Natural killer cell (primary cell): ENCODE measurements at regions of chr17 and their contacts with region 1.

Region 1: DNA sequence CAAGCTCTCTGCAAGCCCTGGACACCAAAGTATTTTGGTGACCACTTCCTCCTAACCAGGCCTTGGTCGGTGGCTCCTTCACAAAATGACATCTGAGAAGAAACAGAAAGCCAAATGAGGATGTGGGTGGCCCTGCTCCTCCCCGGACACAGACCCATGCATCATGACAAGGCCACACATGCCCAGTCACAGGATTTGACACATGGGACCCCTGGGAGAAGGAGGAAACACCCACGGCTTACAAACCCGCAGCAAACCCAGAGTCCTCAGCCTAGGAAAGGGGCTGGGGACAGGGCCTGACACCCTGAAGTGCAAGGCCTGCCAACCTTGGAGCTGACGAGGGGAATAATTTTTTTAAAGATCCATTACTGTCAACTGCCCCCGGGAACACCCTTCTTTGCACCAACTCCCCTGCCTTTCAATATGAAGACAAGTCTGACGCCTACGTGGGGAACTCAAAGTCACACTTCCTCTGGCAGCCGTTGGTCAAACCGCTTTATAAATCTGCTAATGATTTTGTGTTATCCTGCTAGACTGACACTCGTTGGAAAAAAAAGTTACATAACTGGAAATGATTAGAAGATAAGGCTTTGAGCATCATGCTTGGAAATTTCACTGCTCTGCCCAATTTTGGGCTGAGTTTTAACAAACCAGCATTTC is 41.3 kb downstream of the GAS7 start:
- DNase-seq: peak; percentile 59 to 65
- ATAC-seq: peak; percentile 71 to 82 (median 81)
- H3K4me3 ChIP-seq: no peak overlapping the region
- H3K4me3 Mint-ChIP-seq: peak overlapping the region; percentile 71
- H3K27ac ChIP-seq: peak overlapping the region; percentile 82
- H3K27ac Mint-ChIP-seq: peak overlapping the region; percentile 92 to 94
- H3K4me1 ChIP-seq: peaks cover 57% of the 10 kb centered on the region
- H3K4me1 Mint-ChIP-seq: peaks cover 32 to 46% of the 10 kb centered on the region in 2 donors
- H3K27me3 ChIP-seq: no peaks in the 10 kb centered on the region
- H3K27me3 Mint-ChIP-seq: no peaks in the 10 kb centered on the region
- CTCF ChIP-seq: no peak

Region 2: DNA sequence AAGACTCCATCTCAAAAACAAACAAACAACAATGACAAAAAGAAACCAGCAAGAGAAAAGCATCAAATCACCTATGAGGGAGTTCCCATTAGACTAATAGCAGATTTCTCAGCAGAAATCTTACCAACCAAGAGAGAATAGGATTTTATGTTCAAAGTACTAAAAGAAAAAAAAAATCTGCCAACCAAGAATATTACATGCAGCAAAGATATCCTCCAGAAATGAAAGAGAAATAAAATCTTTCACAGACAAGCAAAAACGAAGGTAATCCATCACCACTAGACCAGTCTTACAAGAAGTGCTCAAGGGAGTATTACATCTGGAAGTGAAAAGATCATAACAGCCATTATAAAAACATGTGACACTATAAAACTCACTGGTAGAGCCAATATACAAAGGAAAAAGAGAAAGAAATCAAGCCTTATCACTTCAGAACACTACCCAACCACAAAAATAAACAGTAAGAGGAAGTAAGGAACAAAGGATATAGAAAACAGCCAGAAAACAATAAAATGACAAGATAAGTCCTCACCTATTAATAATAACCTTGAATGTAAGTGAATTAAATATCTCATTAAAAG is 647.8 kb before region 1 on chr17:
- intact Hi-C with region 1: no loop called
- DNase-seq: no peak
- ATAC-seq: no peak
- H3K4me3 ChIP-seq: no peak overlapping the region
- H3K4me3 Mint-ChIP-seq: no peak overlapping the region
- H3K27ac ChIP-seq: no peak overlapping the region
- H3K27ac Mint-ChIP-seq: peak overlapping the region in 1 of 2 donors; percentile 66
- H3K4me1 ChIP-seq: peaks cover 12% of the 10 kb centered on the region
- H3K4me1 Mint-ChIP-seq: peaks cover 49 to 76% of the 10 kb centered on the region in 2 donors
- H3K27me3 ChIP-seq: no peaks in the 10 kb centered on the region
- H3K27me3 Mint-ChIP-seq: no peaks in the 10 kb centered on the region
- CTCF ChIP-seq: no peak

Region 3: DNA sequence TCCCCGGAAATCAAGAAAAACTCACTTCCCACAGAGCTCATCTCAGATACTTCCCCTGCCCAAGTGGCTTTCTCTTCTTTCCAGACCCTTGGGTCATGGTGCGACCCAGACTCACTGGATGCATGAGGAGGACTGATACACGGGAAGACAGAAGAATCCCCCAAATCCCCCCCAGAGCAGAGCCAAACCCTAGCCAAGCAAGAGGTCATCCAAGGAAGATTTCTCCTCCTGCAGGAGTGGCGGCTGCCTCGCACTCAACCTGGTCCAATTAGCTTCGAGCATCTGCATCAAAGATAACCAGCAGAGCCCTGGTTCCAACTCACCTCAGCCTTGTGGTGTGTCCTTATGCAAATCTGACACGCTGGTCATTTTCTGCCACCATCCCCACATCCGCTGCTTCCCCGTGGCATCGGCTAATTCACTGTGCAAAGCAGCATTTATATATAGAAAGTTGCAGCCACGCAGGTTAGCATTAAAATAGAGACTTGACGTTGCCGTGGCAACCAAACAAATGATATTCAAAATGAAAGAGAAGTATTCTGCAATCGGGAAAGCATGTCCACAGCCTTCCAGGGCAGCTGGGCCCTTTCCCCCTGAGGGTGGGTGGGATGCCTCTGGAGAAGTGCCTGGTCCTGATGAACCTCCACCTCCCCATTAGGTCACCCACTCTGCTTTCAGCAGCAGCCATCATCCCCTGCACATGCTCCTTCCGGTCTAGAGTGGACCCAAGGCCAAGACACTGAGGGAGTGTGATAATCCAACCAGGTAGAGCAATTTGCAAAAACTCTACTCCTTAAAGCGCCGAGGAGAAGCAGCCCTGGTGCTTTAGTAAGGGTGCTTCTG is 97.5 kb before region 1 on chr17:
- intact Hi-C with region 1: no loop called
- DNase-seq: peak; percentile 33 to 61
- ATAC-seq: peak; percentile 15 to 58 (median 51)
- H3K4me3 ChIP-seq: no peak overlapping the region
- H3K4me3 Mint-ChIP-seq: no peak overlapping the region
- H3K27ac ChIP-seq: peak overlapping the region; percentile 66
- H3K27ac Mint-ChIP-seq: peak overlapping the region; percentile 59 to 88
- H3K4me1 ChIP-seq: peaks cover 64% of the 10 kb centered on the region
- H3K4me1 Mint-ChIP-seq: peaks cover 54 to 68% of the 10 kb centered on the region in 2 donors
- H3K27me3 ChIP-seq: no peaks in the 10 kb centered on the region
- H3K27me3 Mint-ChIP-seq: no peaks in the 10 kb centered on the region
- CTCF ChIP-seq: no peak

Region 4: DNA sequence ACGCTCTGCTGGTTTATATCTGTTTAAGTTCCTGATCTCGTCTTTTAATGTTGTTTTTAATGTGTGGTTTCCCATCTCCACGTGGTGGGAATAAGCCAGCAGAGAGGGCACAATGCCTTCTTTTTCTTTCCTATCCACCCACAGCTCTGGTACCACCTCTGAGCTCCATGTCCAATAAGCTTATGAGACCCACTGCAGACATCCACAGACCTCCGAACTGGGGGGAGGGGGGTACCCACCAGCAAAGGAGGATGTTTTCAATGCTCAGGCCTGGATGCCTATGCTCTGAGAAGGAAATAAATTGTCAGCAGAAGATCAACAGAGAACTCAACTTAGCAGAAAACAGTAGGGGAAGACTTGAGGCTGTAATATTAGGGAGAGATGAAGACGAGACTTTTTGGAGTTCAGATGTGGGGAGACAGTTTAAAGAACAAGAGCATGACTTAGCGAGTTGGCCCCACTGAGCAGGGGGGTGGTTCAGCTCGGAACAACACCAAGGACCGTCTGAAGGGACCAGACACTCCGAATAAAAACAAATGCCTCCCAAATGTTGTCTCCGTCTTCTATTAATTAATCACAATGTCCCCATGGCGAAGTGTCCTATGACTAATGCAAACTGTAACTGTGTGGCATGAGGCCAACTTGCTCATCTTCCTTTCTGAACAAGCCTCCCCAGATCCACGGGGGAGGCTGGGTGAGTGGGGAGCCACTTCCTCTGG is 21.4 kb before region 1 on chr17:
- intact Hi-C with region 1: no loop called
- DNase-seq: peak in 1 of 2 donors; percentile 36
- ATAC-seq: peak in 2 of 3 donors; percentile 26 to 30
- H3K4me3 ChIP-seq: no peak overlapping the region
- H3K4me3 Mint-ChIP-seq: no peak overlapping the region
- H3K27ac ChIP-seq: no peak overlapping the region
- H3K27ac Mint-ChIP-seq: peak overlapping the region in 1 of 2 donors; percentile 17
- H3K4me1 ChIP-seq: peaks cover 28% of the 10 kb centered on the region
- H3K4me1 Mint-ChIP-seq: peaks cover 21 to 32% of the 10 kb centered on the region in 2 donors
- H3K27me3 ChIP-seq: no peaks in the 10 kb centered on the region
- H3K27me3 Mint-ChIP-seq: peaks cover 0 to under 1% of the 10 kb centered on the region in 2 donors
- CTCF ChIP-seq: no peak

Region 5: GRCh38 chr17:10198509-10199253 is 41.6 kb after region 1 on chr17 and contains the start of gene GAS7:
- intact Hi-C with region 1: loop called (anchors 2 kb)
- DNase-seq: peak; percentile 68 to 78
- ATAC-seq: peak; percentile 69 to 84 (median 76)
- H3K4me3 ChIP-seq: peak within 1 kb of the TSS; percentile 45
- H3K4me3 Mint-ChIP-seq: peak within 1 kb of the TSS; percentile 84
- H3K27ac ChIP-seq: no peak within 1 kb of the TSS
- H3K27ac Mint-ChIP-seq: peak within 1 kb of the TSS; percentile 7 to 74
- H3K4me1 ChIP-seq: peaks cover 30% of the 10 kb centered on the region
- H3K4me1 Mint-ChIP-seq: peaks cover 19 to 34% of the 10 kb centered on the region in 2 donors
- H3K27me3 ChIP-seq: no peaks in the 10 kb centered on the region
- H3K27me3 Mint-ChIP-seq: peaks cover 18 to 27% of the 10 kb centered on the region in 2 donors
- CTCF ChIP-seq: no peak
- total RNA-seq, gene GAS7: 70.7 to 89.1 (median 84.8) TPM

Region 6: GRCh38 chr17:10821064-10821463 is 664.0 kb after region 1 on chr17:
- intact Hi-C with region 1: no loop called
- DNase-seq: no peak
- ATAC-seq: no peak
- H3K4me3 ChIP-seq: no peak overlapping the region
- H3K4me3 Mint-ChIP-seq: no peak overlapping the region
- H3K27ac ChIP-seq: no peak overlapping the region
- H3K27ac Mint-ChIP-seq: no peak overlapping the region
- H3K4me1 ChIP-seq: no peaks in the 10 kb centered on the region
- H3K4me1 Mint-ChIP-seq: no peaks in the 10 kb centered on the region
- H3K27me3 ChIP-seq: no peaks in the 10 kb centered on the region
- H3K27me3 Mint-ChIP-seq: peaks cover 10 to 25% of the 10 kb centered on the region in 2 donors
- CTCF ChIP-seq: no peak